HepG2 (cell line): ENCODE measurements at regions of chr20 and their contacts with region 1.

Region 1: DNA sequence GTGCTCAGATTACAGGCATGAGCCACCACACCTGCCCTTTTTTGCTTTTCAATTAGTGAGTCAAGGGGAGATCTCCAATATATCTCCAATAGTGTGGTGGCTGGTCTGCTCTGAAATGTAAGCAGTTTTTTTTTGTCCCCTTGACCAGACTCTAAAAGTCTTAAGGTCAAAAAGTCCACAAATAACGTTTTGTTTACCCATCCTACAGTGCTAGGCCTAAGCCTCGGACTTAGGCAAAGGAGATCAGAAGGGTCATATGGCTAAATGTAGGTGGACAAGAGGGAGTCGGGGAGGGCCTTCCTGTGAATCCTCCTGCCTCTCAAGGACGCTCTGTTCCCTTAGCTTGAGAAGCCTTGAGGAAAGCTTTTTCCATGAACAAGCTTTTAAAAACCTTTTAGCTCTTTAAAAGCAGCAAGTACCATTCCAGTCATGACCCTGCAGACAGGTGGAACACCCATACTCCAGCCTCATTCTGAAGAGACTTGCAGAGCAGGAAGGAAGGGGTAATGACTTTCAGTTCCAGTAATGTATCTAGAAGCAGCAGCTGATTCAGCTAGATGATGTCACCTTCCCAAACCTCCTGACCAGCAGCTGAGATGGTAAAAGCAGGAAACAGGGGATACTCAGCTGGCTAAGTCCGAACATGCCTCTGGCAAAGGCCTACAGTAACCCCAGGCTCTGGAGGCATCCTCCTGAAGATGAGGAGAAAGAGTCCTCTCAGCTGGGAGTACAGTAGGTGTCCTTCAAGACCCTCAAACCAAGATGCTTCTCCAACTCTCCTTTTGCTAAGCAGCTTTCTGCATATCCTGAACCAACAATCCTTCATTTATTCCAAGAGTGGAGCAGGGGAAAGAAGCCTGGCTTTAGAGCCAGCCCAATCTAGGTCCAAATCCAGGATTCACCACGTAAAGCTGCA is 23.6 kb downstream of the BCL2L1 start:
- DNase-seq: peak; percentile 76
- ATAC-seq: peak; percentile 15
- H3K4me3 ChIP-seq: no peak overlapping the region
- H3K27ac ChIP-seq: peak overlapping the region; percentile 83
- H3K4me1 ChIP-seq: peaks cover 100% of the 10 kb centered on the region
- H3K27me3 ChIP-seq: no peaks in the 10 kb centered on the region
- CTCF ChIP-seq: no peak
- EP300 ChIP-seq: peak in 1 of 2 experiments; percentile 71; a peak in 2 of 4 replicates
- POLR2A ChIP-seq: peak in 1 of 2 experiments; percentile 33; a peak in 1 of 4 replicates
- RAD21 ChIP-seq: no peak

Region 2: DNA sequence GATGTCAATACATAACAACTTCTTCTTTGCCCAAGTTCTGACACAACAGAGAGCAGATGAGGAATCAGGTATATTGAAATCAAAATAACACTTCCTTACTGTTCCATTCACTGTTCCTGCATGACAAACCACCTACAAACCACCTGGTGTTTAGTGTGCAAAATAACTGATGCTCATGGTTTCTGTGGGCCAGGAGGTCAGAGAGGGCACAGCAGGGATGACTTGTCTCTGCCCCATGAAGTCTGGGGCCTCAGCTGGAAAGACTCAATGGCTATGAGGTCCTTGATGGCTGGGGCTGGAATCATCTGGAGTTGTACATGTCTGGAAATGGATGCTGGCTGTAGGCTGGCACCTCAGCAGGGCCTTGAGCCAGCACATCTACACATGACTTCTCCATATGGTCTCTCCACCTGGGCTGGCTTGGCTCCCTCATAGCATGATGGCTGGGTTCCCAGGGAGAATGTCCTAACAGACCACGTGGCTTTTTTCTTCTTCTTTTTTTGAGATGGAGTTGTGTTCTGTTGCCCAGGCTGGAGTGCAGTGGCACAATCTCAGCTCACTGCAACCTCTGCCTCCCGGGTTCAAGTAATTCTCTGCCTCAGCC is 68.8 kb before region 1 on chr20:
- CTCF ChIA-PET with region 1: no interaction called
- POLR2A ChIA-PET with region 1: interaction called, 10 read pairs
- in situ Hi-C with region 1: no loop called
- intact Hi-C with region 1: no loop called
- DNase-seq: no peak
- ATAC-seq: no peak
- H3K4me3 ChIP-seq: no peak overlapping the region
- H3K27ac ChIP-seq: no peak overlapping the region
- H3K4me1 ChIP-seq: peaks cover 17% of the 10 kb centered on the region
- H3K27me3 ChIP-seq: no peaks in the 10 kb centered on the region; a peak in 2 of 5 replicates
- CTCF ChIP-seq: no peak
- EP300 ChIP-seq: no peak
- POLR2A ChIP-seq: no peak
- RAD21 ChIP-seq: no peak

Region 3: DNA sequence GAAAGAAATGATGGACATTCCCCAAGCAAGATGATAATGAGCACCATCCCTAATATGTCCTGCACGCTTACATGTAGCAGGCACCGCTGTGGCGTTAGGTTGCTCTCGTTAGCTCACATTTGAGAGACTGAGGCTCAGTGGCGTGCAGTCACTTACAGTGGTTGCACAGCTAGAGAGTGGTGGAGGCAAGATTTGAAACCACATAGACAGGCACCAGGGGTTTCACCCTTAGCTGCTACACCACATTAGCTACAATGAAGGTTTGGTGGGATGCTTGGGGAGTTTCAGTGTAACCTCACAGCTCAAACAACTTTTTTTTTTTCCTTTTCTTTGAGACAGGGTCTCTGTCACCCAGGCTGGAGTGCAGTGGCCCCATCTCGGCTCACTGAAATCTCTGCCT is 57.7 kb before region 1 on chr20:
- CTCF ChIA-PET with region 1: no interaction called
- POLR2A ChIA-PET with region 1: no interaction called
- in situ Hi-C with region 1: no loop called
- intact Hi-C with region 1: no loop called
- DNase-seq: no peak
- ATAC-seq: no peak
- H3K4me3 ChIP-seq: no peak overlapping the region
- H3K27ac ChIP-seq: no peak overlapping the region
- H3K4me1 ChIP-seq: peaks cover 32% of the 10 kb centered on the region
- H3K27me3 ChIP-seq: peaks cover 13 to 31% of the 10 kb centered on the region in 2 experiments; a peak in 3 of 5 replicates
- CTCF ChIP-seq: no peak
- EP300 ChIP-seq: no peak
- POLR2A ChIP-seq: no peak
- RAD21 ChIP-seq: no peak

Region 4: GRCh38 chr20:31674895-31675827 is 23.9 kb before region 1 on chr20:
- CTCF ChIA-PET with region 1: interaction called, 3 read pairs
- POLR2A ChIA-PET with region 1: interaction called, 643 read pairs
- in situ Hi-C with region 1: no loop called
- intact Hi-C with region 1: no loop called
- DNase-seq: no peak
- ATAC-seq: no peak
- H3K4me3 ChIP-seq: no peak overlapping the region
- H3K27ac ChIP-seq: peak overlapping the region; percentile 0
- H3K4me1 ChIP-seq: peaks cover 81% of the 10 kb centered on the region
- H3K27me3 ChIP-seq: no peaks in the 10 kb centered on the region
- CTCF ChIP-seq: no peak
- EP300 ChIP-seq: no peak
- POLR2A ChIP-seq: no peak; a peak in 1 of 4 replicates
- RAD21 ChIP-seq: no peak

Region 5: DNA sequence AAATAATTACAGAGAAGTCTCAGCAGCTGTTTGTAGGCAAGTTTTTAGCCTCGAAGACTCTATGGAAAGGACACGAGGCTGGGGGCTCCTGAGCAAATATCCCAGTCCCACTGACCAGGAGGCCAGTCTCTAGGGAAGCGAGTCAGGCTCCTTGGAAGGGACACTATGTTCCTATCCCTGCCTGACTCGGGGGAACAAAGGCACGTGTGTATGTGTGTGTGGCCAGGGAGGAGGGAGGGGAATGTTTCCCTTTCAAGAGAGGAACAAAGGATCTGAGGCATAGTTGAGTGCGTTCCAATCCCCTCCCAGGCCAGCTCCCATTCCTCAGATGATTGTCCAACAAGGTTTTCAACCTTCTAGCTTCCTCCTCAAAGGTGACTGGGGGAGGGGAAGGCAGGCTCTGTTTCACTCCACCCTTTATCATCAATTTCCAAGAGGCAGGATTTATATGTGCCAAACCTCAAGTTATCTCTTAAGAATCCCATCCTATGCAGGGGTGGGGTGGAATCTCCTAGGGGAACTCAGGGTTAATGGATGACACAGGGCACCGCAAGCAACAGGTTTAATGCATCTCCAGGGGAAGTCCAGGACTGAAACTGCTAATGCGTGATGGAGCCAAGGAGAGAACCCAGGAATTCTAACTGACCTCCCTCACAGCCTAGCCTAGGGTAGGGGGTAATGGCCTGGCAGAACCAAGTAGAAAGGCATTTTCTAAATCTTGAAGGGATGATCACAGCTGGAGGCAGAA is 13.7 kb after region 1 on chr20:
- CTCF ChIA-PET with region 1: no interaction called
- POLR2A ChIA-PET with region 1: interaction called, 2,822 read pairs
- in situ Hi-C with region 1: no loop called
- intact Hi-C with region 1: loop called (anchors 1 kb)
- DNase-seq: peak; percentile 95
- ATAC-seq: peak; percentile 61
- H3K4me3 ChIP-seq: peak overlapping the region in 2 of 3 experiments; percentile 2 to 29; a peak in 2 of 6 replicates
- H3K27ac ChIP-seq: peak overlapping the region; percentile 61
- H3K4me1 ChIP-seq: peaks cover 99% of the 10 kb centered on the region
- H3K27me3 ChIP-seq: no peaks in the 10 kb centered on the region
- CTCF ChIP-seq: no peak
- EP300 ChIP-seq: peak in 1 of 2 experiments; percentile 92; a peak in 3 of 4 replicates
- POLR2A ChIP-seq: peak in 1 of 2 experiments; percentile 39; a peak in 1 of 4 replicates
- RAD21 ChIP-seq: no peak